Colonic mucosa (tissue), 4 donors: ENCODE measurements at regions of chr6 and their contacts with region 1.

Region 1: DNA sequence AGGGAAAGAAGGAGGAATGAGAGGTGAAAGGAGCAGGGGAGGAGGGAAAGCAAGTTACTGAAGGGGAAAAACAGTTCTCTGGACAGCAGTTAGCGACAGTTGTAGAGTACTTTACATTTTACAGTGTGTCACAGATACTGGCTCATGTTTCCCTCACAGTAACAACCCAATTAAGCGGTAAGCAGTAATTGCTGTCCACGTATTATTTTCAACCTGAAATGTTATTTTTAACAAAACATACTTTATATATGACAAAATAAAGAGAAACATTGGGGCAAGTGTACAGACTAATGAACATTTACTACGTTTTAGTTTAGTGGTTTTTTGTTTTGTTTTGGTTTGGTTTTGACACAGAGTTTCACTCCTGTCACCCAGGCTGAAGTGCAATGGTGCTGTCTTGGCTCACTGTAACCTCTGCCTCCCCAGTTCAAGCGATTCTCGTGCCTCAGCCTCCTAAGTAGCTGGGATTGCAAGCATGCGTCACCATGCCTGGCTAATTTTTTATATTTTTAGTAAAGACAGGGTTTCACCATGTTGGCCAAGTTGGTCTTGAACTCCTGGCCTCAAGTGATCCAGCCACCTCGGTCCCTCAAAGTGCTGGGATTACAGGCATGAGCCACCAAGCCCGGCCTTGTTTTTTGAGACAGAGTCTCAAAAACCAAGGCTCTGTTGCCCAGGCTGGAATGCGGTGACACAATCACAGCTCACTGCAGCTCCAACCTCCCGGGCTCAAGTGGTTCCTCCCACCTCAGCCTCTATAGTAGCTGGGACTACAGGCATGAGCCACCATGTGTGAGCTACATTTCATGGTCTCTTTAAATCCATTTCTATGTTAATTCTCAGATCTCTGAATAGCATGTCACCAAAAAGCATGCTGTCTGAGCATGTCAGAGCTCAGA is 22.6 kb upstream of the BTN3A2 start:
- DNase-seq: no peak
- H3K4me3 ChIP-seq: no peak overlapping the region
- H3K27ac ChIP-seq: no peak overlapping the region
- H3K4me1 ChIP-seq: no peaks in the 10 kb centered on the region
- H3K27me3 ChIP-seq: no peaks in the 10 kb centered on the region
- CTCF ChIP-seq: no peak

Region 2: DNA sequence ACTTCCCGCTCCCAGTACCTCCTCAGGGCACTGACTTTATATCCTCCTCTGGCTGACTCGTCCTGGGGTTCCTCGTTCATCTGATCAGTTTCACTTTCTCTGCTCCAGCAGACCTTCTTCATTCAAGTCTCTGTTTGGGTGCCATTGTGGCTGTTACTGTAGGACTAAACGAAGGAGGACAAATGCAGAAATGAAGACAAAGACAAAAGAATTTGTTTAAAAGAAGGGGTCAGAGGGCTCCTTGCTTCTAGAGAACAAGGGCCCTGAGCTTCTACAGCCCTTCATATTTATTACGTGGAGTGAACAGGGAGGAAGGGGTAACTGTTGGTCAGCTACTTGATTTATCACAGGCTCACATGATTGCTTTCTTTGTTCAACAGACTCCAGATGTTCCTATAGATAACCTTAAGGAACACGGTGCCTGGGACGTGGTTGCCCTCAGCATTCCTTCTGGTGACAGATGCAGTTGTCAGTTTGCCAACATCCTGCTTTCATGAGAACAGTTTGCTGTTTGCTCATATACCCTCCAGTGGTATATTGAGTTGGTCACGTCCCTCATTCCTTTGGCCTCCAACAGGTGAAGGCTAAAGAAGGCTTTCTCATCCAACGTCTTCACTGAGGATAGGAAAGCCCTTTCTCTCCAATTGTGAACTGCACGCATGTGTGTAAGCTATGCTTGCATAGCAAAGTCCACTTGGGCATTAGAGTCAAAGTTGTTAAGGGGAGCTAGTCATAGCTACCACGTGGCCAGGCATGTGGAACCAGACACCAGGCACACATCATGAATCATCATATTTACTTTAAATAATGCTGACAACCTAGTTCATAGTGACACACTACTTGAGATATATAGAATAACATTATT is 46.4 kb before region 1 on chr6:
- intact Hi-C with region 1: no loop called
- DNase-seq: peak; percentile 29
- H3K4me3 ChIP-seq: no peak overlapping the region
- H3K27ac ChIP-seq: peak overlapping the region; percentile 55
- H3K4me1 ChIP-seq: no peaks in the 10 kb centered on the region
- H3K27me3 ChIP-seq: no peaks in the 10 kb centered on the region
- CTCF ChIP-seq: no peak

Region 3: GRCh38 chr6:26571592-26572296 is 229.4 kb after region 1 on chr6:
- intact Hi-C with region 1: loop called (anchors 5 kb)
- DNase-seq: peak; percentile 72
- H3K4me3 ChIP-seq: peak overlapping the region; percentile 54
- H3K27ac ChIP-seq: peak overlapping the region; percentile 59
- H3K4me1 ChIP-seq: peaks cover 4% of the 10 kb centered on the region
- H3K27me3 ChIP-seq: no peaks in the 10 kb centered on the region
- CTCF ChIP-seq: no peak

Region 4: DNA sequence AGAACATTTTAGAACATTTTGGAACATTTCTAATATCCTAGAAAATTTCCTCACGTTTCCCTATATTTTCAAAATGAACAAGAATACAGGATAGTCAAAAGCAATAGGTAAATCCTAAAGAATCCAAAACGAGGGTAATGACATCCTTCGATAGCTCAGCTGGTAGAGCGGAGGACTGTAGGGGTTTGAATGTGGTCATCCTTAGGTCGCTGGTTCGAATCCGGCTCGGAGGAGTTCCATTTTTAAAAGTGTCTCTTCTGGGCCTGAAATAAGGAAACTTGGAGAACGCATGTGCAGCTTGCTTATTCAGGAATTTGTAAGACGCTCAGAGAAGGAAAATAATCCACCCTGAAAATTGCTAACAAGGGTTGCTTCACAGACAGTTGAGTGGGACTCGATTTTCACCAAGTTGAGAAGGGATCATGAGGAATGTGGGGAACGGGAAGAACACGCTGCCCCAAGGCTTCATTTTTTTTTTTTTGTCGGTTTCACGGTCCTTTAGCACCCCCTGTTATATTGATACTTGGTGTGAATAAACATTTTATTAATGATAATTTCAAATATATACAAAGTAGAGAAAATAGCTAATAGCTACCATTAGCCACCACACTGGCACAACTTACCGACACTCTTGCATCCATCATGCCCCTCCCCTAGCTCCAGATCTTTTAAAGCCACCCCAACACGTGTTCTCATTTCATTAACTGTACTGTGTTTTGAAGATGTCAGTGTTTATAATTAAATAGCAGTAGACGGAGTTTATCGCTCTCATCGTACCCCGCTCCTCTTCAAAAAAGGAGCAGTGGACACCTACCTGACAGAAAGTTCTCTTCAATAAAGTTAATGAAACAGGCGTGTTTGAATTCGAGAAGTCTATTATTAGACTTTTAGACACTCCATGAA is 252.6 kb after region 1 on chr6:
- intact Hi-C with region 1: loop called (anchors 5 kb)
- DNase-seq: no peak
- H3K4me3 ChIP-seq: no peak overlapping the region
- H3K27ac ChIP-seq: peak overlapping the region; percentile 82
- H3K4me1 ChIP-seq: peaks cover 9% of the 10 kb centered on the region
- H3K27me3 ChIP-seq: peaks cover 10% of the 10 kb centered on the region
- CTCF ChIP-seq: no peak

Region 5: DNA sequence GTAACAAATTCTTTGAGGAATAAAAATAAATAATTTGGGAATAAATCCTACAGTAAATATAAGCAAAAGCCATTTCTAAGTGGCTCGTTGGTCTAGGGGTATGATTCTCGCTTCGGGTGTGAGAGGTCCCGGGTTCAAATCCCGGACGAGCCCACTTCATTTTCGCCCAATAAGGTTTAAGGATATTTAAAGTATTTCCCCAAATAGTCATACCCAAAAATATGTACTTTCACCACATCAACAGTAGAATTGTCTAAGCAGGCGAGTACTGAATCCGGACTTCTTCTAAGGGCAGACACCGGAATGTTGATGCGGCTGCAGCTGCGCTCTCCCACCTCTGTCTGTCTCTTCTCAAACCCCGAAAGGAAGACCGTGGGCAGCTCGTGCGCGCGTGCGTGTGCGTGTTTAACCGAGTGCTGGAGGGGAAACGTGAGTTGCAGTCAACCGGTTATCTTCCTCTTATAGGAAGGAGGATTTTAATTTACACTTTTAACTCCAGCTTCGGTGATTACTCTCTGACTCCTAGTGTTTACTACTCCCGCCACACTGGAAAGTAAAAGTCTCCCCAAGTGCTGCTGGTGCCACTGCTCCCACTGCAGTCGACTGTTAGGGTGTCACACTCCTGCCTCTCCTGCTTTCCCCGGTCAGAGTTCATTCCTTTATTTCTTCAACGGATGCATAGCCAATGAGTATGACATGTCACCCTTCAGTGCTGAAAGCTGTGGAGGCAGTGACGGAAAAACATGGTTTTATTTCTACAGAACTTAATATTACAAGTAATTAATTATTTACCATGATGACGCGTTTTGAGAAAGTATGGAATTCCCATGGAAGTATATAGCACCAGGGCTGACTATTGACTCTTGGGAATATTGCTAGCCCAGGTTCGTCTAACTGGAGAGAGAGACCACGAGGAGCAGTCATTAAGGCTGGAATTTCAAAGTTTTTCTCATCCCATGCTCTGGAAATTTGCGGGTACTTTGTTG is 749.6 kb after region 1 on chr6:
- intact Hi-C with region 1: loop called (anchors 10 kb)
- DNase-seq: no peak
- H3K4me3 ChIP-seq: no peak overlapping the region
- H3K27ac ChIP-seq: no peak overlapping the region
- H3K4me1 ChIP-seq: no peaks in the 10 kb centered on the region
- H3K27me3 ChIP-seq: peaks cover 15% of the 10 kb centered on the region
- CTCF ChIP-seq: no peak